ENCODE measurements at regions of chr2 and their contacts with region 1.

Region 1: GRCh38 chr2:217943446-217944389 is 59.1 kb downstream of the TNS1 start:
- DNase-seq: peak; percentile 36 to 92
- H3K4me3 ChIP-seq: peak overlapping the region; percentile 64 to 81
- H3K27ac ChIP-seq: peak overlapping the region; percentile 98 to 100
- H3K4me1 ChIP-seq: peaks cover 9 to 40% of the 10 kb centered on the region in 2 donors
- H3K27me3 ChIP-seq: no peaks in the 10 kb centered on the region
- CTCF ChIP-seq: peak; percentile 37 to 54 (median 38)

Region 2: DNA sequence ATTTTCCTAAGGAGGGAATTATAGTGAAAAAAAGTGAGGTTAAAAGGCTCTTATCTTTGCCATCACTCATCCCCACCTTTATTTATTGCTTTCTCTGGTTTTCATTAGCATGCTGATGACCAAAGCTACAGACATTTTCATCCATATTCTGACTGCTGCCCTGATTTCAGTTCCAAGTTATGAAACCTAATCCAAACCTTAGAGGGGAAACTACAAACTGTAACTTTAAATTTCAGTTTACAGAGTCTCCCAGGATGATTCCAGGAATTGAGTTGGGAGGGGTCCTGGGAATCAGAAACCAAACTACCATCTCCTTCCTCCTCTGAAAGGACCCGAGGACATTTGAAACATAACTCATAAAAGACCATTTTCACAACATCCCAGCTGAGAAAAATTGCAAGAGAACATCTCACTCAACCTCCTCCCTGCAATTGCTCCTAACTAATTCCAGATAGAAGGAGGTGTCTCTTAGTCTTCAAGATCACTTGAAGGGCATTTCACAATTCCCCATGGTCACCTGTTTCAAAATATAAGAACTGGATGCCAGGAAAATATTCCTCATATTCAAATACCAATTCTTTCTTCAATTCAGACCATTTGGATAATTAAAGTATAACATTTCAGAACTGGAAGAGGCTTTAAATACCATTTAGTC is 461.5 kb before region 1 on chr2:
- intact Hi-C with region 1: no loop called
- DNase-seq: no peak
- H3K4me3 ChIP-seq: no peak overlapping the region
- H3K27ac ChIP-seq: no peak overlapping the region
- H3K4me1 ChIP-seq: no peaks in the 10 kb centered on the region
- H3K27me3 ChIP-seq: no peaks in the 10 kb centered on the region
- CTCF ChIP-seq: no peak

Region 3: DNA sequence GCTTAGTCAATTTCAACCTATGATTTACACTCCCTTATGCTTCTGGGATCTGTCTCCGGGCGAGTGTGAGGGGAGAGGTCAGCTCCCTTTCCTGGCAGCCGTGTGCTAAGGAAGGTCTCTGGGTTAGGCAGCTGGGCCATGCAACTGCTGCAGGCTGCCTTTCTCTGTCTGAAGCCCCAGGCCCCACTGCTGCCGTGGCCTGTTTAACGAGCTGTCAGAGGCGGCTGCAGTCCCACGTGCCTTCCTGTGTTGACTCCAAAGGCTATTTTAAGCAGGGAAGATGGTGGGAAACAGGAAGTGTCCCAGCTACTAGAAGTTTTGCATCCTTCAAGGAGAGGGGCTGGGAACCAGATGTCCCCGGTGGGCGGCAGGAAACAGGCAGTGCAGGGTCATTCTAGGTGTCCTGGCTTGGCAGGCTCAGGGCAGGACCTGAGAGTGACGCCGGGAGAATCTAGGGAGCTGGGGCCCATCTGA is 127.3 kb before region 1 on chr2:
- intact Hi-C with region 1: no loop called
- DNase-seq: no peak
- H3K4me3 ChIP-seq: no peak overlapping the region
- H3K27ac ChIP-seq: peak overlapping the region; percentile 44 to 45
- H3K4me1 ChIP-seq: peaks cover 10 to 26% of the 10 kb centered on the region in 2 donors
- H3K27me3 ChIP-seq: no peaks in the 10 kb centered on the region
- CTCF ChIP-seq: no peak

Region 4: DNA sequence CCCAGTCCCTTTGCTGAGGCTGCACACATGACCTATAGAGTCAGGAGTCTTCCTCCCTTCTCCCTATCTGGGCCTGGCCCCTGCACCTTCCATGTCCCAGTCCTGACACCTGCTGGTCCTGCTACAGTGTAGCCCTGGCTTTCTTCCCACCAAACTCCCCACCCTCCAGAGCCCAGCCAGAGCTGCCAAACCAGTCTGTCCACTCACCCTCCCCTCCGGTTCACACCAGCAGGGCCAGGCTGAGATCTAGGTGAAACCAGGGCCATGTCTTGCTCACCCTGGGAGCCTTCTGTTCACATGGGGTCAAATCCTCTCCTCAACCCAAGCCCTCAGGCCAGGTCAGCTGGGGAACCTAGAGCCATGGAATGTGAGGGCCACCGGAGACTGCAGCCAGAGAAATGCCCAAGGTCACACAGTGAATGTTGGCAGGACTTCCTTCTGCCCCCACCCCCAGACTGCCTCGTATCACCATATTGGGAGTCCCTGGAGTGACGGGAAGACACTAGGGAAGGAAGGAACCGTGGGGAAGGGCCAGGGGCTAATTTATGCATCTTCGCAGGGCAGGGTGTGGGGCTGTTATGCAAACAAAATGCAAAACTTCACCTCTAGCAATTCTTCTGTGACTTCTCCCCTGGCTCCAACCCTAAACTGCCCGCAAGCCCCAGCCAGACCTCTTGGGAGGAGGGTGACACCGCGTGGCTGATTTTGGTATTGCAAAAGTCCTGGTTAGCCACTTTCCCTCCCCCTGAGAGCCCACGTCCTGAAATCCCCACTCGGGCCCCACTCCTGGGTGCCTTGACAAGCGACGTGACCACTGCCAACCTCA is 44.5 kb after region 1 on chr2:
- intact Hi-C with region 1: loop called (anchors 1 kb)
- DNase-seq: peak in 1 of 2 donors; percentile 93
- H3K4me3 ChIP-seq: peak overlapping the region; percentile 19 to 47
- H3K27ac ChIP-seq: peak overlapping the region; percentile 57 to 68
- H3K4me1 ChIP-seq: peaks cover 8 to 20% of the 10 kb centered on the region in 2 donors
- H3K27me3 ChIP-seq: no peaks in the 10 kb centered on the region
- CTCF ChIP-seq: peak; percentile 91 to 97 (median 95)

Region 5: GRCh38 chr2:218216674-218217359 is 273.1 kb after region 1 on chr2 and contains the start of gene ARPC2:
- intact Hi-C with region 1: no loop called
- DNase-seq: peak; percentile 75 to 97
- H3K4me3 ChIP-seq: peak within 1 kb of the TSS; percentile 96
- H3K27ac ChIP-seq: peak within 1 kb of the TSS; percentile 97 to 98
- H3K4me1 ChIP-seq: peaks cover 19 to 35% of the 10 kb centered on the region in 2 donors
- H3K27me3 ChIP-seq: no peaks in the 10 kb centered on the region
- CTCF ChIP-seq: peak in 1 of 3 experiments; percentile 22
- total RNA-seq, gene ARPC2: 237 TPM

Region 6: GRCh38 chr2:218582076-218582475 is 638.4 kb after region 1 on chr2:
- intact Hi-C with region 1: no loop called
- DNase-seq: no peak
- H3K4me3 ChIP-seq: no peak overlapping the region
- H3K27ac ChIP-seq: no peak overlapping the region
- H3K4me1 ChIP-seq: no peaks in the 10 kb centered on the region
- H3K27me3 ChIP-seq: no peaks in the 10 kb centered on the region
- CTCF ChIP-seq: no peak